Activated T-helper 1 cell treated with anti-CD3 and anti-CD28 coated beads, Interleukin-12 subunit alpha, Interleukin-12 subunit beta, Interleukin-2, Interleukin-4 antibody, amounts not matched to agents 30 ng/mL and 10 ng/mL and 1 ng/mL, durations not matched to agents 14 hours and 24 hours and 36 hours (primary cell): ENCODE measurements at regions of chr4 and their contacts with region 1.

Region 1: GRCh38 chr4:2954358-2955185 is 8.6 kb downstream of the NOP14 start:
- DNase-seq: peak; percentile 64
- H3K4me3 Mint-ChIP-seq: peak overlapping the region; percentile 80
- H3K27ac Mint-ChIP-seq: peak overlapping the region; percentile 98
- H3K4me1 Mint-ChIP-seq: peaks cover 72% of the 10 kb centered on the region
- H3K27me3 Mint-ChIP-seq: no peaks in the 10 kb centered on the region

Region 2: GRCh38 chr4:2934813-2935761 is 19.5 kb before region 1 on chr4:
- intact Hi-C with region 1: loop called (anchors 1 kb)
- DNase-seq: peak; percentile 95
- H3K4me3 Mint-ChIP-seq: peak overlapping the region; percentile 94
- H3K27ac Mint-ChIP-seq: peak overlapping the region; percentile 87
- H3K4me1 Mint-ChIP-seq: peaks cover 49% of the 10 kb centered on the region
- H3K27me3 Mint-ChIP-seq: no peaks in the 10 kb centered on the region